Endothelial cell of umbilical vein (primary cell): ENCODE measurements at regions of chr5 and their contacts with region 1.

Region 1: DNA sequence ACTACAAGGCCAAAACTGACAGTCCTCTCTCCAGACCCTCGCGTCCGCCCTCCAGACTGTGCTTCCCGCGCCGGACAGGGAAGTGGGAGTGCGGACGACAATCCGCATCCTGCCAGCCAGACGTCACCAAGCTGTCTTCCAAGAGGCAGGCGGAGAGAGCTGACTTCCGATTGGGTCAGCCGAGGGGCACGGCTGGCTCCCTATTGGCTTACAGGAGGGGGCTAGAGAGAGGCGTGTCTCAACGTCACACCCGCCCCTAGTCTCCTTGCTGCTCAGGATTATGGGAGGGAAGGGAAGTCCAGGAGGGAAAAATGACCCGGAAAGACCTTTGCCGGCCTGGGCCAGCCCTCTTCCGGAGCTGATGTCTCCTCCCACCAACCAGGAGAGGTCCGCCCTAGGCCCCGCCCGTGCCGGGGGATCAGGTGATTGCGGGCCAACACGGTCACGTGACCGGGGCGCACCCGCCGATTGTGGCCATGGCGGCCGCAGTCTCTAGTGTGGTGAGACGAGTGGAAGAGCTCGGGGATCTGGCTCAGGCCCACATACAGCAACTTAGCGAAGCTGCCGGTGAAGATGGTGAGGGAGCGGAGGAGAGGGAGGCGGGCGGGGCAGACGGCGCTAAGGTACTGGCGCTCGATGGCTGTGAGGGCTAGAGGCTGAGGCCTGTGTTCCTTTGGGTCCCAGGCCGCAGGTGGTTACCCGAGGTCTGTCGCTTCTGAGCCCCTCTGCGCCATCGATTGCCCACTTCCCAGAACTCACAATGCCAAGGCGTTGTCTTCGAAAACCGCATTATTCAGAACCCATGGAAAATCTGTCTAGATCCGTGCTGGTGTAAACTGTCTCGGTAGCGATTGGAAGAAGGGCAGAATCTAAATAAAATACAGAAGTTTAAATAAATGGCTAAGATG is at the start of gene RIMOC1:
- DNase-seq: peak; percentile 100
- H3K4me3 ChIP-seq: peak within 1 kb of the TSS; percentile 68 to 96 (median 91)
- H3K27ac ChIP-seq: peak within 1 kb of the TSS; percentile 86
- H3K4me1 ChIP-seq: peaks cover 14% of the 10 kb centered on the region
- H3K27me3 ChIP-seq: peaks cover 0 to 2% of the 10 kb centered on the region in 2 experiments
- CTCF ChIP-seq: no peak
- POLR2A ChIP-seq: peak; percentile 82
- total RNA-seq, gene RIMOC1: 27.4 and 32.0 TPM in 2 replicates

Region 2: GRCh38 chr5:41356786-41357185 is 547.4 kb before region 1 on chr5:
- CTCF ChIA-PET with region 1: no interaction called
- POLR2A ChIA-PET with region 1: no interaction called
- dilution Hi-C with region 1: no loop called
- intact Hi-C with region 1: no loop called
- DNase-seq: no peak
- H3K4me3 ChIP-seq: no peak overlapping the region
- H3K27ac ChIP-seq: no peak overlapping the region
- H3K4me1 ChIP-seq: no peaks in the 10 kb centered on the region
- H3K27me3 ChIP-seq: no peaks in the 10 kb centered on the region
- CTCF ChIP-seq: no peak
- POLR2A ChIP-seq: no peak

Region 3: DNA sequence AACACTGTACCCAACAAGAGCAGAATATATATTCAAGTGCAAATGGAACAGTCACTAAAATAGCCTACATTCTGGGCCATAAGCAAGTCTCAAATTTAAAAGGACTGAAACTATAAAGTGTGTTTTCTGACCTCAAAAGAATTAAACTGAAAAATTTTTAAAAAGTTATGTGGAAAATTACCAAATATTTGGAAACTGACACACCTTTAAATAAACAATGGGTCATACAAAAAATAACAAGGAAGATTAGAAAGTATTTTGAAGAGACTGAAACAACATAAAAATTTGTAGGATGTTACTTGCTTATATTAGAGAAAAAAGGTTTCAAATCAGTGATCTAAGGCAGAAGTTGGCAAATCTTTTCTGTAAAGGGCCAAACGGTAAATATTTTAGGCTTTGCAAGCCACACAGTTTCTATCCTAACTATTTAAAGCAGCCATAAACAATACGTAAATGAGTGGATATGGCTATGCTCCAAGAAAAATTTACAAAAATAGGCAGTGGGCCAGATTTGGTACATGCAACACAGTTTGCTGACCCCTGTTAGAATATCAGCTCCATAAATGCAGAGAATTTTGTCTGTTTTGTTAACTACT is 115.2 kb before region 1 on chr5:
- CTCF ChIA-PET with region 1: no interaction called
- POLR2A ChIA-PET with region 1: interaction called, 3 read pairs
- dilution Hi-C with region 1: no loop called
- intact Hi-C with region 1: loop called (anchors 2 kb)
- DNase-seq: peak; percentile 95
- H3K4me3 ChIP-seq: peak overlapping the region in 1 of 3 experiments; percentile 14
- H3K27ac ChIP-seq: peak overlapping the region; percentile 81
- H3K4me1 ChIP-seq: peaks cover 45% of the 10 kb centered on the region
- H3K27me3 ChIP-seq: no peaks in the 10 kb centered on the region
- CTCF ChIP-seq: no peak
- POLR2A ChIP-seq: no peak

Region 4: DNA sequence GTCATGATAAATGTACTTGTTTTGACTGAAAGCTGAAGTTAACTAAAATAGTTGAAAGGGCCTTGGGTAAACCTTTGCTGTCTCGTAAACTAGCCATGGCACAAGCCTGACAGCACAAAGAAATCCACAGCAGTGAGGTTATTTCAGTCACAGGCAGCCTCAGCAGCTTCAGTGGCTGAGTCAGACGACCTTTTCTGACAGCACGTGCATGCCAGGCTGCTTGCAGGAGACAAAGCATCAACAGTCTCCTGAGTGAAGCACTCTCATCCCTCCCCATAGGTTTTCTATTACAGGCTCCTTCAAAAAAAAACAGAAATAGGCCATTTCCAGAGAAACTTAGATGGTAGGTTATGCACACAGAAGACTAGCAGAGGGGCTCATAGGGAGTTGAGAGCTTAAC is 68.5 kb before region 1 on chr5:
- CTCF ChIA-PET with region 1: no interaction called
- POLR2A ChIA-PET with region 1: no interaction called
- dilution Hi-C with region 1: no loop called
- intact Hi-C with region 1: loop called (anchors 2 kb)
- DNase-seq: peak; percentile 89
- H3K4me3 ChIP-seq: no peak overlapping the region
- H3K27ac ChIP-seq: peak overlapping the region; percentile 60
- H3K4me1 ChIP-seq: peaks cover 38% of the 10 kb centered on the region
- H3K27me3 ChIP-seq: no peaks in the 10 kb centered on the region
- CTCF ChIP-seq: no peak
- POLR2A ChIP-seq: peak; percentile 29

Region 5: GRCh38 chr5:41856644-41857491 is 47.3 kb before region 1 on chr5:
- CTCF ChIA-PET with region 1: interaction called, 16 read pairs
- POLR2A ChIA-PET with region 1: interaction called, 3 read pairs
- dilution Hi-C with region 1: no loop called
- intact Hi-C with region 1: no loop called
- DNase-seq: peak; percentile 77
- H3K4me3 ChIP-seq: no peak overlapping the region
- H3K27ac ChIP-seq: no peak overlapping the region
- H3K4me1 ChIP-seq: no peaks in the 10 kb centered on the region
- H3K27me3 ChIP-seq: no peaks in the 10 kb centered on the region
- CTCF ChIP-seq: peak; percentile 61
- POLR2A ChIP-seq: no peak

Region 6: DNA sequence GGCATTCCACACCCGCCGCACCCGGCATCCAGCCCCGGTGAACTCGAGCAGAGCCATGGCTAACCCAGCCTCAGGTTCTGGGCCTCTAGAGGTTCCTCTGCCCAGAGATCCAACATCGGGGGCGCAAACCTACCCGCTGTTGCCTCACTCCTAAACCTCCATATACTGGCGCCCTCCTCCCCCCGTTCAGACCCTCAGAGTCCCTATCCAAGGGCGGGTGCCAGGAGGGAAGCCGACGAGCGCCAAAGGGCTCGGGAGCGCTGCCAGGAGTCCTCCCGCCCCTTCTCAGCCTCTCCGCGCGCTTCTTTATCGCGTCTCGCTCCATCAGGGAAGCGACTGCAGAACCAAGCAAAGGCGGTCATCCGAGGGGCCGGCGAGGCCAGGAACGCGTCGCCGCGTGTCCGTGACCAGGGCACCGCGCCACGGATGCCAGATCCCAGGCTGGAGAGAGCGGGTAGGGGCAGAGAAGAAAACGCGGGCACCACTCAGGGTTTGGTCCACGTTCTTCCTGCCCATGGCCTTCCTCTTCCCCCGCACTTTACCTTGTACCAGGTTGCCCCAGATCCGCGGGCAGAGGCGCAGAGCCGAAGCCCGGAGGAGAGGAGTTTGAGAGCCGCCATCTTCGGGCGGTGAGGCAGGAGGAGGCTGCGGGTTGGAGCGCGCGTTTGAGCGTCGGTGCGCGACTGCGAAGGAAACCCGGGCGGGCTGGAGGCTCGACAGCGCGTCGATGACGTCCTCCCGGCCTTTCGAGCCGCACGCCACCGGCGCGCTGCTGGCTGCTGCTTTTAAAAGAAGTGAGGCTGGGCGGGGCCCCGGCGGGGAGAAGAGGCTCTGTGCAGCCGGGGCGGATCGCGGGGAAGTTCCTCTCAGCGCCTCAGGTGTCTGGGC is 34.2 kb before region 1 on chr5 and contains the start of gene OXCT1:
- CTCF ChIA-PET with region 1: interaction called, 6 read pairs
- POLR2A ChIA-PET with region 1: no interaction called
- dilution Hi-C with region 1: no loop called
- intact Hi-C with region 1: loop called (anchors 1 kb)
- DNase-seq: peak; percentile 82
- H3K4me3 ChIP-seq: peak within 1 kb of the TSS; percentile 75 to 97 (median 86)
- H3K27ac ChIP-seq: peak within 1 kb of the TSS; percentile 90
- H3K4me1 ChIP-seq: peaks cover 11% of the 10 kb centered on the region
- H3K27me3 ChIP-seq: peaks cover 0 to 1% of the 10 kb centered on the region in 2 experiments
- CTCF ChIP-seq: no peak
- POLR2A ChIP-seq: peak; percentile 60
- total RNA-seq, gene OXCT1: 33.7 and 37.4 TPM in 2 replicates

Region 7: GRCh38 chr5:41924872-41925554 is 20.9 kb after region 1 on chr5 and contains the start of gene FBXO4:
- CTCF ChIA-PET with region 1: interaction called, 10 read pairs
- POLR2A ChIA-PET with region 1: interaction called, 4 read pairs
- dilution Hi-C with region 1: no loop called
- intact Hi-C with region 1: loop called (anchors 1 kb)
- DNase-seq: peak; percentile 88
- H3K4me3 ChIP-seq: peak within 1 kb of the TSS; percentile 27 to 77 (median 66)
- H3K27ac ChIP-seq: peak within 1 kb of the TSS; percentile 92
- H3K4me1 ChIP-seq: peaks cover 22% of the 10 kb centered on the region
- H3K27me3 ChIP-seq: no peaks in the 10 kb centered on the region
- CTCF ChIP-seq: peak; percentile 50 to 74
- POLR2A ChIP-seq: peak; percentile 86
- total RNA-seq, gene FBXO4: 7.0 and 7.7 TPM in 2 replicates

Region 8: GRCh38 chr5:42074353-42074752 is 170.2 kb after region 1 on chr5:
- CTCF ChIA-PET with region 1: no interaction called
- POLR2A ChIA-PET with region 1: no interaction called
- dilution Hi-C with region 1: no loop called
- intact Hi-C with region 1: no loop called
- DNase-seq: no peak
- H3K4me3 ChIP-seq: no peak overlapping the region
- H3K27ac ChIP-seq: no peak overlapping the region
- H3K4me1 ChIP-seq: no peaks in the 10 kb centered on the region
- H3K27me3 ChIP-seq: no peaks in the 10 kb centered on the region
- CTCF ChIP-seq: no peak
- POLR2A ChIP-seq: no peak

Region 9: GRCh38 chr5:43313035-43313853 is 1409.1 kb after region 1 on chr5 and contains the start of gene HMGCS1:
- CTCF ChIA-PET with region 1: no interaction called
- POLR2A ChIA-PET with region 1: no interaction called
- dilution Hi-C with region 1: no loop called
- intact Hi-C with region 1: loop called (anchors 10 kb)
- DNase-seq: peak; percentile 100
- H3K4me3 ChIP-seq: peak within 1 kb of the TSS; percentile 73 to 91 (median 75)
- H3K27ac ChIP-seq: peak within 1 kb of the TSS; percentile 43
- H3K4me1 ChIP-seq: peaks cover 35% of the 10 kb centered on the region
- H3K27me3 ChIP-seq: no peaks in the 10 kb centered on the region
- CTCF ChIP-seq: peak in 1 of 2 donors; percentile 5
- POLR2A ChIP-seq: peak; percentile 57
- total RNA-seq, gene HMGCS1: 133 and 149 TPM in 2 replicates